ENCODE measurements at regions of chr10 and their contacts with region 1.

Region 1: GRCh38 chr10:104406715-104407650 is 53.4 kb downstream of the CFAP58 start:
- DNase-seq: peak in 1 of 2 donors; percentile 34
- ATAC-seq: peak in 1 of 3 donors; percentile 54
- H3K4me3 ChIP-seq: no peak overlapping the region
- H3K4me3 Mint-ChIP-seq: no peak overlapping the region
- H3K27ac ChIP-seq: no peak overlapping the region
- H3K27ac Mint-ChIP-seq: no peak overlapping the region
- H3K4me1 ChIP-seq: no peaks in the 10 kb centered on the region
- H3K4me1 Mint-ChIP-seq: no peaks in the 10 kb centered on the region
- H3K27me3 ChIP-seq: peaks cover 2% of the 10 kb centered on the region
- H3K27me3 Mint-ChIP-seq: peaks cover 22 to 37% of the 10 kb centered on the region in 2 donors
- CTCF ChIP-seq: no peak

Region 2: DNA sequence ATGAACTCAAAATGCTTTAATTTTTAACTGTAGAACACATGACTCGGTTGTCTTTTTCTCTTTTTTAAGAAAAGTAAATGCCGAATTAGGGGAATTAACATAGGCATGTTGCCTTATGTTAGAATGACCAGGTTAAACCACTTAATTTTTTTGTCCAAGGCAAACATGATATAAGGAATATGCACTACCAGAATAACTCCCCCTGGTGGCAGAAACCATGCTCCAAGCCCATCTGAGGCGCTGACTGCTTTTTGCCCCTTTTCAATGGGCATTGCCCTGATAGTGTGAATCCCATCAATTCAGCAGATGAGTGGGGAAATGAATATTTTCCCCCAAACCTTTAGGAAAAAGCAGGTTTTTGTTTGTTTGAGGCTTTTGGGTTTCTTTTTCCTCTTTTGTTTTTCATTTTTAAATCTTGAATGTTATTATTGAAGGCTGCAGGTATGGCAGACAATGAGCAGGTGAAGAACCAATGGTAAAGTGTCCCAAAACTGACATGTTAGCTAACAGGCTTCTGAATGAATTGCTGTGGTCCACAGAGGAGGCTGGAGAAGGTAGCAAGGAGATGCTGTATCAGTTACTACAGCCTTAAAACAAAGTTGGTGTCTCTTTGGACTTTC is 518.4 kb after region 1 on chr10:
- intact Hi-C with region 1: loop called (anchors 5 kb)
- DNase-seq: peak in 1 of 2 donors; percentile 55
- ATAC-seq: no peak
- H3K4me3 ChIP-seq: no peak overlapping the region
- H3K4me3 Mint-ChIP-seq: no peak overlapping the region
- H3K27ac ChIP-seq: no peak overlapping the region
- H3K27ac Mint-ChIP-seq: no peak overlapping the region
- H3K4me1 ChIP-seq: no peaks in the 10 kb centered on the region
- H3K4me1 Mint-ChIP-seq: no peaks in the 10 kb centered on the region
- H3K27me3 ChIP-seq: no peaks in the 10 kb centered on the region
- H3K27me3 Mint-ChIP-seq: peaks cover 0 to 5% of the 10 kb centered on the region in 2 donors
- CTCF ChIP-seq: no peak